KBM-7 (cell line): ENCODE measurements at regions of chr1 and their contacts with region 1.

Region 1: GRCh38 chr1:2194898-2195673 is 514 bp upstream of the FAAP20 start:
- DNase-seq: peak; percentile 89

Region 2: GRCh38 chr1:2372551-2373490 is 177.7 kb after region 1 on chr1:
- in situ Hi-C with region 1: loop called (anchors 10 kb)
- DNase-seq: no peak